ENCODE measurements at regions of chr17 and their contacts with region 1.

Region 1: DNA sequence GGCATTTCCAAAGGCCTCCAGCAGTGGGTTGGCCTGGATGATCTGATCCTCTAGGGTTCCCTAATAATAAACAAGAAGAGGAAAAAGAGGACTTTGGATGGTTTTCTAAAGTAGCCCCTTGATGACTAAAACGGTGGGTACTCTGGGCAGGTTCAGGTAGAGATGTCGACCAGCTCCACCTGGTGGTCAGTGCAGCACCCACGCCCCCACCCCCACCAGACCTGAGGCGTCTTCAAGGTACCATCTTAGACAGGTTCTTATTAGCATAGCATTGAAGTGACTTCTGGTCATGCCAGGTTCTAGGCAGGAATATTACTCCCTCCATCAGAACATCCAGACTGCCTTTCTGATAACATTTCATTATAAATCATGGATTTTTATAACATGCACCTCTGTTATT is 15.0 kb downstream of the MYH13 start:
- DNase-seq: peak; percentile 27

Region 2: DNA sequence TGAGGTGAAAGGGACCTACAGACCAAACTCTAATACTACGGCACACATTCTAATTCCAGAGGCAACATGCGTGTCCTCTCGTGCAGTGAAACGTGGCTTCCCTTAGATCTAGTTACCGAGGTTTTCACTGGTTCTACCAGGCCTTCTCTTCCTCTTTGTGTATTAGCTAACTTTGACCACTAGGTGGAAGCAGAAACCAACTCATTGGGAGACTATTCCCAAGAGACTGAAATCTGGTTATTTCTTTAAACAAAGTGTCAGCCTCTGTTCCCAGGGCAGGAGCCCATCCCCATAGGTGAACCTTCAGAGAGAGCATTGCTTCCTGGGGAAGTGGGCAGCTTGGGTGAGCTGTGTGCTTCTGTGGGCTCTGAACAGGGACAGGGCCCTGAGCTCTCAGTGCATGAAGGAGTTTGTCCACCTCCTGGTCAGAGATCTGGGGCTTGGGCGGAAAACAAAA is 433.0 kb before region 1 on chr17:
- in situ Hi-C with region 1: loop called (anchors 25 kb)
- DNase-seq: peak; percentile 74

Region 3: GRCh38 chr17:10471853-10472252 is 114.1 kb after region 1 on chr17:
- in situ Hi-C with region 1: no loop called
- DNase-seq: no peak